Posterior cingulate gyrus (tissue), 11 donors: ENCODE measurements at regions of chr2 and their contacts with region 1.

Region 1: DNA sequence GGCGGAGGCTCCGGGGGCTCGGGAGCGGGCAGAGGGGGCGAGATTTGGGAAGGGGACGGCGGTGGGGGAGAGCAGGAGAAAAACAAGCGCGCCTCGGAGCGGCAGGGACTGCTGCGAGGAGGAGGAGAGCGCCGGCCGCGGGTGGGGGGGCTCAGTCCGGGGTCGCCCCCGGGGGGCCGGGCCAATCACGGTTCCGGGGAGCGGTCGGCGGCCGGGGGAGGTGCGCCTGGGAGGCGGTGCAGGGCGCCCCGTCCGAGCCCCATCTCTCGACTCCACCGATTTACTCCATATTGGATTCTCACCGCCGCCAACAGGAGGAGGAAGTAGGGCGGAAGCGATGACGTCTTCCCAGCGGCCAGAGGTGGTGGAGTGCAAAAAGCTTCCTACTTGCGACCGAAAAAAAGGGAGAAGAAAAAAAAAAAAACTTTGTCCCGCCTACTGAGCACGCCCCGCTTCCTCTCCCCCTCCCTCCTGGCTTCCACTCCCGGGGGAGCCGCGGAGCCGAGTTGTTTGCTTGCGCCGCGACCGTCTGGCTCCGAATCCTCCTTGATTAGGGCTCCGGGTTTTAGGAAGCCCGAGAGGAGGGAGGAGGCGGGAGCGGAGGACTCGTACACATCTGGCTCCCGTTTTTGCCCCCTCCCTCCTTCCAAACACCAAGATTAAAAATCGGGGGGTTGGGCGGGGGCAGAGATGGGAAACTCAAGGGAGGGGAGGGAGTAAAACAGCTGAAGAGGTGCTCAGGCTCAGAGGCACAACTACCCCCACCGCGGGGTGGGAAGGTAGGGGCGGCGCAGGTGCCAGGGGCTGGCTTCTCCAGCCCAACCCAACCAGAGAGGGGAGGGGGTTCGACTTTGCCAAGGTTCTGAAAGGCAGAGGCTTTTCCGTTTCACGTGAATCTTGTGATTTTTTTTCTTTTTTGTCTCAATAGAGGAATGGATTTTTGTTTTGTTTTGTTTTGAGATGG is at the start of gene SPRED2:
- DNase-seq: peak; percentile 74 to 97 (median 87)

Region 2: GRCh38 chr2:65056215-65057053 is 376.1 kb before region 1 on chr2 and contains the start of gene CEP68:
- intact Hi-C with region 1: loop called (anchors 5 kb)
- DNase-seq: peak; percentile 95 to 100 (median 96)

Region 3: GRCh38 chr2:65227425-65228262 is 204.9 kb before region 1 on chr2 and contains the start of gene ACTR2:
- intact Hi-C with region 1: loop called (anchors 5 kb)
- DNase-seq: peak; percentile 92 to 100 (median 96)

Region 4: GRCh38 chr2:65264821-65265670 is 167.5 kb before region 1 on chr2:
- intact Hi-C with region 1: loop called (anchors 5 kb)
- DNase-seq: peak in 2 of 10 donors; percentile 10 to 24

Region 5: GRCh38 chr2:65554765-65555591 is 122.5 kb after region 1 on chr2:
- intact Hi-C with region 1: loop called (anchors 10 kb)
- DNase-seq: peak in 1 of 10 donors; percentile 42